Dorsolateral prefrontal cortex (tissue), 120 donors: ENCODE measurements at regions of chrX and their contacts with region 1.

Region 1: DNA sequence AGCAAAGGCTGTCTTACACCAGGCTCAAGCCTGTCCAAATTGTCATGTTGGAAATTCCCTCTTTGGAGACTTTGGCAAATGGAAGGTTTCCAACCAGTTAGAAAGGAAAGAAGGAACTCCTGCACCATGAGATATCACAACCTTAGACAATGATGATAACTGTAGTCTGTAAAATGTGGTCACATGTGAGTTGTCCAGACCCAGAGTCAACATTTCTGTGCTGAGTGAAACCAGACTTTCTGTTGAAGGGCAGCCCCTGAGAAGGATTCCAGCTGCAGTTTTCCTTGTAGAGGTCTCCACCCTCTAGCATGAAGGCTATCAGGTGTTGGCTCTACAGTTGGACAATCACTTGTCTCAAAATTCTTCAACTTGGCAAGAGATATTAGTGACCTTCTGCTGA is 82.4 kb downstream of the SOX3 start:
- DNase-seq: no peak
- H3K4me3 ChIP-seq: no peak overlapping the region
- H3K27ac ChIP-seq: no peak overlapping the region
- H3K27me3 ChIP-seq: peaks cover 0 to 64% (median 15%) of the 10 kb centered on the region in 45 donors
- CTCF ChIP-seq: no peak

Region 2: GRCh38 chrX:140337263-140337662 is 85.2 kb before region 1 on chrX:
- intact Hi-C with region 1: no loop called
- DNase-seq: no peak
- H3K4me3 ChIP-seq: no peak overlapping the region
- H3K27ac ChIP-seq: no peak overlapping the region
- H3K27me3 ChIP-seq: peaks cover 0 to 32% (median 0%) of the 10 kb centered on the region in 45 donors
- CTCF ChIP-seq: no peak

Region 3: GRCh38 chrX:140355922-140356321 is 66.6 kb before region 1 on chrX:
- intact Hi-C with region 1: loop called in 1 of 2 experiments (anchors 10 kb)
- DNase-seq: no peak
- H3K4me3 ChIP-seq: no peak overlapping the region
- H3K27ac ChIP-seq: no peak overlapping the region
- H3K27me3 ChIP-seq: peaks cover 0 to 86% (median 19%) of the 10 kb centered on the region in 45 donors
- CTCF ChIP-seq: no peak

Region 4: DNA sequence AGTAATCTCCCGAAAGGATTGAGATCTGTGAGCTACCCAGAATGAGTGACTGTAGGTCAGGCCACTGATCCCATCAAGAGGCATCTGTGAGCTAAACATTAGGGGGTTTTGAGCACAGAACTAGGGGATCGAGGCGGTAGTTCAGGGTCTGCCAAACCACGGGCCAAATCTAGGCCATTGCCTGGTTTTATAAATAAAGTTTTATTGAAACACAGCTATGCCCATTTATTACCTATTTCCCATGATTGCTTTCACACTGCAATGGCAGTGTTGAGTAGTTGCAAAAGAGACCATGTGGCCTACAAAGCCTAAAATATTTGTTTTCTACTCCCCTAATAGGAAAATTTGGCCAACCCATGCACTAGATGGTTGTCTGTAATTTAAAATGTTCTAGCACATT is 34.1 kb after region 1 on chrX:
- intact Hi-C with region 1: no loop called
- DNase-seq: no peak
- H3K4me3 ChIP-seq: no peak overlapping the region
- H3K27ac ChIP-seq: no peak overlapping the region
- H3K27me3 ChIP-seq: peaks cover 0 to 53% (median 6%) of the 10 kb centered on the region in 45 donors
- CTCF ChIP-seq: no peak